AG04449 (cell line): ENCODE measurements at regions of chr5 and their contacts with region 1.

Region 1: DNA sequence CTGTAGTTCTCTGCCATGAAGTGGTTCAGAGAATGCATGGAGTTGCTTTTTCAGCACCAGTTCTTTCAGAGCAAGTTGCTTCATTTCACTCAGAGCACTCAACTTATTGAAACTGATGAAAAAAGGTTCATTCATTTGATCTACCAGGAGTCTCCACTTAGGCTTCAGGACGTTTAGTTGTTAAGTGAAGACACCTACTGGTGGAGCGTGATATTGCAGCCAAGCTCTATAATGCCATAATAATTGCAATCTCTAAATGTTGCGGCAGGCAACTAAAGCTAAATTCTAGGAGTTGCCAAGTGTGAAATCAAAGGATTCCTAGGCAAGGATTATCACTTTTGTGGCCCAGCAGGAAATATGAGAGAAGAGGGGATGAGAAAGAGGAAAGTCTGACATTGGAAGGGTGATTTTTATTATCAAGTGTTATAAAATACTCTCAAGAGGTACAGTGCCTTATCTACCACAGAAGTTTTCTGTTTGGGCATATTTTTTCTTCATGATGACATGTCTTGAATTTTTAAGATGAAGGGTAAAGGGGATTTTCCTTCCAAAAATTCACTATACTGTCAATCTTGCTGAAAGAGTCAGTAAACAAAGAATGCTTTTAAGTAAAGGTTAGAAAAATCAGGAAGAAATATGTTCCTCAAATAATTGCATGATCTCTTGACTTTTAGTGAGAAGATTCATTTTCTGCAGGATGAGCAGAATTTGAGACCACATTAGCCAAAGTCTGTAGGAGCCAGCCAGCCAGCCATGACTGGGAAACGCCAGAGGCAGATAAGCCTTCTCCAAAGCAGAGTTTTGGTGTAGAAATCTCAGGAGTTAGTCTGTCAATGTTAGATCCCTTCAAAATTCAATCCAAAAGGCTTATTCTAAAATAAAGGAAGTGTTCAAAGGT is 83.4 kb downstream of the SH3PXD2B start:
- DNase-seq: no peak
- H3K4me3 ChIP-seq: no peak overlapping the region
- CTCF ChIP-seq: peak; percentile 34

Region 2: DNA sequence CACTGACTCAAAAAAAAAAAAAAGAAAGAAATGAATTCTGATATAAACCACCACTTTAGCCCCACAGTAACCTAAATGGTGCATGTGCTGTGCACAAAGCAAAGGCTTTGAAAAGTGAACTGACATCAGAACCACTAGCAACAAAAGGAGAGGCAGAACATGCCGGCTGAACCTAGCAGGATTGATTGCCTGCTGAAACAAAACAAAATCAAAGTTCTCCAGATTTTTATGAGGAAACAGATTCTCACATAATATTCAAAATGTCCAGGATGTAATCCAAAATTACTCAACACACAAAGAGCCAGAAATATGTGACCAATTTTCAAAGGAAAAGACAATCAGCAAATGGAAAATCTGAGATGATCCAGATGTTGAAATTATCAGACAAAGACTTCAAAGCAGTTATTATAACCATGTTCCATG is 125.2 kb before region 1 on chr5:
- CTCF ChIA-PET with region 1: no interaction called
- POLR2A ChIA-PET with region 1: no interaction called
- DNase-seq: no peak
- H3K4me3 ChIP-seq: no peak overlapping the region
- CTCF ChIP-seq: no peak

Region 3: GRCh38 chr5:172380987-172381643 is 10.2 kb after region 1 on chr5:
- CTCF ChIA-PET with region 1: interaction called, 16 read pairs
- POLR2A ChIA-PET with region 1: interaction called, 3 read pairs
- DNase-seq: no peak
- H3K4me3 ChIP-seq: no peak overlapping the region
- CTCF ChIP-seq: no peak

Region 4: DNA sequence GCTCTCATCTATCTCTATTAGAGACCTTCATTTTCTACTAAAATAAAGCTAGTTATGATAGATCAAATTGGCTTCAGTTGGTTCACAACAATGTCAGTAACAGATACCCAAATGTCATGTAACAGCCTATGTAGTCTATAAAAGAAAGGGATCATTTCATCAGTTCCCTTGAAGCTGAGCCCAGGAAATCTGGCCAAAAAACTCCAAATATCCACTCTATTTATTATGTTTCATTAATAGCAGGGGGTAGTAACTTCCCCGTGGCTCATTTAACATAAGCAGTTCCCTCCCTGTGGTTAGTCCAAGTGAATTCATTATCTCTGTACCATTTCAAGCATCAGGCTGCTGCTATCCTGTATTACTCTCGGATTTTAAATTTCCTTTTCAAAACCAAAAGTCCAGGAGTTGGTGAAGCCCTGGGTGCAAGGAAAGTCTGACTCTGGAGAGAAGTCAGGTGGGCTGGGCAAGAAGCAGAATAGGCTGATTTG is 17.4 kb after region 1 on chr5:
- CTCF ChIA-PET with region 1: interaction called, 16 read pairs
- POLR2A ChIA-PET with region 1: interaction called, 3 read pairs
- DNase-seq: no peak
- H3K4me3 ChIP-seq: no peak overlapping the region
- CTCF ChIP-seq: no peak

Region 5: DNA sequence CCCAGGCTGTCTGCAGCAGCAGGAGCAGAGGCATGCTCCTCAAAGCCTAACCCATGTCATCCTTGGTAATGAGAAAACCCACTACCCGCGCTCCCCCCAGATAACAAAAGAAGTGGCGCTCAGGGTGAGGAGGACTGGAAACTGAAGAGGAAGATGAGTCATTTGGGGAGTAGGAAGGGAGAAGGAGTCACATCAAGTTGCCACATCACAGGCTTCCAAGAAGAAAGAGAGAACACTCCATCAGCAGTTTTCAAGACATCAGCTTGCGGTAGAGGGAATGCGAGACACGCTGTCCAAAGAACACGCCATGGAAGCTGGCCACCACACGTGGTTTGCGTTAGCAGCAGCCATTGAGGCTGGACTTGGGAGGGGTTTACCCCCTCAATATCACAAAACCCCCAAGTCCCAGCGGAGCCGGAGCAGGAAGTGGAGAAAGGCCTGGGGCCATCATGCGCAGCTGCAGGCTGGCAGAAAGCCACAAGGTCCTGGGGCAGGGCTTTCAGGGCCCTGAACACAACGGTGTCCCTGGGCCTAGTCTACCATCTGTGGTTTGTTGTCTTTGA is 41.9 kb after region 1 on chr5:
- CTCF ChIA-PET with region 1: no interaction called
- POLR2A ChIA-PET with region 1: no interaction called
- DNase-seq: peak; percentile 90
- H3K4me3 ChIP-seq: no peak overlapping the region
- CTCF ChIP-seq: no peak